ENCODE measurements at regions of chr11 and their contacts with region 1.

Region 1: DNA sequence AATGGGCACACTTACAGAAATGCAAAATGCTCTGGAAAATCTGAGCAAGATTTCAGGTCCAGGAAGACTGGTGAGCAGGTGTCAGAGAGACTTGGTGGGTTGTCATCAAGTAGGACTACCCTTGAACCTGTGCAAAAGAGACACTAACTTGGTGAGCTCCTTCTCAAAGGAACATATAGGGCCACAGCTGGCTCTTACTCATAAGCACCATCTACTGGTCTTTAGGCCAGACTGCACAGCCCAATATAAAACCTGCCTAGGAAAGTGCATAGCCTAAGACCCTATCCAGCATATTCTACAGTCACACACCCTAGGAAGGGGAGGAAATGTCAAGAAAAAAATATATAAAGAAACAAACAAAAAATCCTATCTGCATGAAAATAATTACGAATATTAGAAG is 18.2 kb upstream of the OR10W1 start:
- DNase-seq: peak; percentile 53
- H3K4me3 ChIP-seq: no peak overlapping the region
- H3K27ac ChIP-seq: no peak overlapping the region
- H3K4me1 ChIP-seq: no peaks in the 10 kb centered on the region
- H3K27me3 ChIP-seq: no peaks in the 10 kb centered on the region
- CTCF ChIP-seq: peak; percentile 36 to 70
- POLR2A ChIP-seq: no peak

Region 2: GRCh38 chr11:57751676-57752253 is 534.5 kb before region 1 on chr11 and contains the start of gene BTBD18:
- CTCF ChIA-PET with region 1: interaction called, 14 read pairs
- POLR2A ChIA-PET with region 1: no interaction called
- dilution Hi-C with region 1: no loop called
- intact Hi-C with region 1: loop called (anchors 2 kb)
- DNase-seq: peak; percentile 60
- H3K4me3 ChIP-seq: no peak within 1 kb of the TSS
- H3K27ac ChIP-seq: no peak within 1 kb of the TSS
- H3K4me1 ChIP-seq: no peaks in the 10 kb centered on the region
- H3K27me3 ChIP-seq: no peaks in the 10 kb centered on the region
- CTCF ChIP-seq: peak; percentile 46 to 49
- POLR2A ChIP-seq: no peak
- total RNA-seq, gene BTBD18: not detected in 2 replicates

Region 3: DNA sequence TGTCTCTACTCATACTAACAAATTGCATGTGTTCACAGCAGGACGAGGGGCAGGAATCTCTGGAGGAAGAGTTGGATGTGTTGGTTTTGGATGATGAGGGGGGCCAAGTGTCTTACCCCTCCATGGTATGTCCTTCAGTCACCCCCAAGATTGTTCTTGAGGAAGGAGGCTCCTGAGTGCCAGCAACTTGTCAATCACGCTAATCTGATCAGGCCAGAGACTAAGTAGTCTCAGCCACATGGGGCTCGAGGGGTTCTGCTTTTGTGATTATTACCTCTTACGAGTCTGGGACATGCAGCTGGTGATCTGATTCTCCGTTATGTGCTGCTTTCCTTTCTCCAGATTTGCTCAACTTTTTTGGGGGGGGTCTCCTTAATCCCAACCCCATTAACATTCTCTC is 470.4 kb before region 1 on chr11:
- CTCF ChIA-PET with region 1: interaction called, 15 read pairs
- POLR2A ChIA-PET with region 1: no interaction called
- dilution Hi-C with region 1: no loop called
- intact Hi-C with region 1: no loop called
- DNase-seq: no peak
- H3K4me3 ChIP-seq: no peak overlapping the region
- H3K27ac ChIP-seq: no peak overlapping the region
- H3K4me1 ChIP-seq: no peaks in the 10 kb centered on the region
- H3K27me3 ChIP-seq: no peaks in the 10 kb centered on the region
- CTCF ChIP-seq: no peak
- POLR2A ChIP-seq: no peak

Region 4: DNA sequence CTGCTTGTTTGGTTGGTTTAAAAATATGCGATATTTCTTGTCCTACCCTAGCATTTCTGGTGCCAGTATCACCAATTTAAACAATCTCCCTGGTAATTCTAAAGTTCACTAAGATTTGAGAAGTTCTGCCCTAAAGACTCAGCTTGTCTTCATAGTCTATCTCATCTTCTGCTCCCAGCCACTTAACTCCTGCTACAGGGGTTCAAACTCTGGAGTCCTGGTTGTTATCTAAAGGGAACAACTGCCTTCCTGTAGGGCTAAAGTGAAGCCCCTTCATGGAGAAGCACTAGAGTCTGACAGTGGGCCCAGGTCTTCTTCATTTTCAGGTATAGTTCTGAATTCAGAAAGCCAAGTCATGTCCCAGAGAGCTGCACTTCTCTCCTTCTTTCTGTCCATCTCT is 451.4 kb before region 1 on chr11:
- CTCF ChIA-PET with region 1: interaction called, 7 read pairs
- POLR2A ChIA-PET with region 1: no interaction called
- dilution Hi-C with region 1: no loop called
- intact Hi-C with region 1: loop called (anchors 5 kb)
- DNase-seq: no peak
- H3K4me3 ChIP-seq: no peak overlapping the region
- H3K27ac ChIP-seq: no peak overlapping the region
- H3K4me1 ChIP-seq: no peaks in the 10 kb centered on the region
- H3K27me3 ChIP-seq: peaks cover 6 to 7% of the 10 kb centered on the region in 2 experiments
- CTCF ChIP-seq: no peak
- POLR2A ChIP-seq: no peak

Region 5: DNA sequence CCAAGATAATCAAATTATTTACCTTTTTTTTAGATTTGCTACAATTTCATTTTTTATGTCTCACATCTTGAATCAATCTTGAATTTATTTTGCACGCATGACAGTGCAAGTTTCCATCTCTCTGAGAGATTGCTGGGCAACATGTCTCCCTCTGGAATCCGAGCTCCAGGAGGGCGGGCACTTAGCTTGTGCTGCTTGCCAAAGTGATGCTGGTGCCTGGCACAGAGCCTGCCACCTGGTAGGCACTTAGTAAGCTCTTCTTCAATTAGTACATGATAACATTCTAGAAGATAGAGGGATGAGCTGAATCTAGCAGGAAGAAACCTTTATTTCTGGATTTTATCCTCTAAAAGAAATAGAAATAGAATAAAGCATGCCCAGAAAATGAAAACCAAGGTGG is 133.5 kb before region 1 on chr11:
- CTCF ChIA-PET with region 1: no interaction called
- POLR2A ChIA-PET with region 1: no interaction called
- dilution Hi-C with region 1: no loop called
- intact Hi-C with region 1: no loop called
- DNase-seq: no peak
- H3K4me3 ChIP-seq: no peak overlapping the region
- H3K27ac ChIP-seq: no peak overlapping the region
- H3K4me1 ChIP-seq: no peaks in the 10 kb centered on the region
- H3K27me3 ChIP-seq: no peaks in the 10 kb centered on the region
- CTCF ChIP-seq: no peak
- POLR2A ChIP-seq: no peak

Region 6: GRCh38 chr11:58513747-58514367 is 227.6 kb after region 1 on chr11:
- CTCF ChIA-PET with region 1: interaction called, 14 read pairs
- POLR2A ChIA-PET with region 1: no interaction called
- dilution Hi-C with region 1: no loop called
- intact Hi-C with region 1: loop called (anchors 2 kb)
- DNase-seq: peak; percentile 73
- H3K4me3 ChIP-seq: no peak overlapping the region
- H3K27ac ChIP-seq: no peak overlapping the region
- H3K4me1 ChIP-seq: no peaks in the 10 kb centered on the region
- H3K27me3 ChIP-seq: peaks cover 18 to 32% of the 10 kb centered on the region in 2 experiments
- CTCF ChIP-seq: peak; percentile 57 to 68
- POLR2A ChIP-seq: no peak